Mammary epithelial cell (primary cell): ENCODE measurements at regions of chr3 and their contacts with region 1.

Region 1: GRCh38 chr3:31029706-31030105 is 135.2 kb upstream of the GADL1 start:
- DNase-seq: no peak
- H3K4me3 ChIP-seq: no peak overlapping the region
- H3K27ac ChIP-seq: no peak overlapping the region
- H3K4me1 ChIP-seq: no peaks in the 10 kb centered on the region
- H3K27me3 ChIP-seq: no peaks in the 10 kb centered on the region
- CTCF ChIP-seq: no peak

Region 2: GRCh38 chr3:31086698-31087097 is 57.0 kb after region 1 on chr3:
- CTCF ChIA-PET with region 1: no interaction called
- dilution Hi-C with region 1: loop called (anchors 5 kb)
- in situ Hi-C with region 1: no loop called
- intact Hi-C with region 1: no loop called
- DNase-seq: no peak
- H3K4me3 ChIP-seq: no peak overlapping the region
- H3K27ac ChIP-seq: no peak overlapping the region
- H3K4me1 ChIP-seq: no peaks in the 10 kb centered on the region
- H3K27me3 ChIP-seq: no peaks in the 10 kb centered on the region
- CTCF ChIP-seq: no peak